CD8-positive, alpha-beta T cell (primary cell): ENCODE measurements at regions of chrX and their contacts with region 1.

Region 1: GRCh38 chrX:43557792-43558191 is 98.3 kb upstream of the MAOA start:
- DNase-seq: peak; percentile 29 to 78 (median 59)
- ATAC-seq: peak; percentile 44
- H3K4me3 ChIP-seq: no peak overlapping the region
- H3K4me3 Mint-ChIP-seq: no peak overlapping the region
- H3K27ac ChIP-seq: no peak overlapping the region
- H3K27ac Mint-ChIP-seq: no peak overlapping the region
- H3K4me1 ChIP-seq: peaks cover 4% of the 10 kb centered on the region
- H3K4me1 Mint-ChIP-seq: peaks cover 4% of the 10 kb centered on the region
- H3K27me3 ChIP-seq: no peaks in the 10 kb centered on the region
- H3K27me3 Mint-ChIP-seq: no peaks in the 10 kb centered on the region
- CTCF ChIP-seq: peak; percentile 56

Region 2: DNA sequence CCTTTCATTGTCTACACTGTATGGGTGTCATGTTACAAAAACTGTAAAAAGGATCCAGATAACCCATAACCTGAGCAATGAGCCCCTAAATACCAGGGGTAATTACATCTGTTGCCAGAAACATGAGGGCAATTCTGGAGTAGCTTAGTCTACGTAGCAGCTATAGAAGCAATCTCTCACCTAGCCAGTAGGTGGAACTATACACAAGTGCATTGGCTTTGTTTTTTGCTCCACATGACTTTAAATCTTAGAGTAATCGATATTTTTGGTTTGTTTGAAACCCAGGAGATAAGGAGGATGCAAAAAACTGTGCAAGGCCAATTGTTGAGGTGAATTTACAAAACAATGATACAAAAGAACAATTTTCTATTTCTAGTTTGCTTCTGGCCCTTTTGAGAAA is 1776.3 kb before region 1 on chrX:
- CTCF ChIA-PET with region 1: interaction called, 6 read pairs
- POLR2A ChIA-PET with region 1: no interaction called
- intact Hi-C with region 1: loop called (anchors 1 to 2 kb)
- DNase-seq: peak in 3 of 9 experiments; percentile 6 to 63 (median 51)
- ATAC-seq: peak; percentile 54
- H3K4me3 ChIP-seq: no peak overlapping the region
- H3K4me3 Mint-ChIP-seq: no peak overlapping the region
- H3K27ac ChIP-seq: no peak overlapping the region
- H3K27ac Mint-ChIP-seq: no peak overlapping the region
- H3K4me1 ChIP-seq: no peaks in the 10 kb centered on the region
- H3K4me1 Mint-ChIP-seq: peaks cover 15% of the 10 kb centered on the region
- H3K27me3 ChIP-seq: no peaks in the 10 kb centered on the region
- H3K27me3 Mint-ChIP-seq: no peaks in the 10 kb centered on the region
- CTCF ChIP-seq: peak; percentile 68

Region 3: DNA sequence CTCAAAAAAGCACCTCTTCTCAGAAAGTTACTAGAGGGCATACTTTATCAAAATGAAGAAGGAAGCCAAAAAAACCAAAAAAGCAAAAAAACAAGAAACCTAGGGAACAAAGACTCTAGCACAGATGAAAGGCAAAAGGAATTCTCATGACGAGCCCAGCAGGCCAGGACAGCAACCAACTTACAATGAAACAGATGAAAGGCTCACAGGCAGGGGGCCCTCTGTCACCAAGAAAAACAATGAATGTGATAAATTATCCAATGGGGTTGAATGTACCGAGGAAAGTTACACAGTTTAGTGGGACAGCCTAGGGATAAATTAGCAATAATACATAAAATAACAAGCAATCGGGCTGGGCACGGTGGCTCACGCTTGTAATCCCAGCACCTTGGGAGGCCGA is 1754.8 kb before region 1 on chrX:
- CTCF ChIA-PET with region 1: interaction called, 4 read pairs
- POLR2A ChIA-PET with region 1: no interaction called
- intact Hi-C with region 1: loop called (anchors 1 to 5 kb)
- DNase-seq: no peak
- ATAC-seq: no peak
- H3K4me3 ChIP-seq: no peak overlapping the region
- H3K4me3 Mint-ChIP-seq: no peak overlapping the region
- H3K27ac ChIP-seq: no peak overlapping the region
- H3K27ac Mint-ChIP-seq: no peak overlapping the region
- H3K4me1 ChIP-seq: peaks cover 7% of the 10 kb centered on the region
- H3K4me1 Mint-ChIP-seq: peaks cover 46% of the 10 kb centered on the region
- H3K27me3 ChIP-seq: no peaks in the 10 kb centered on the region
- H3K27me3 Mint-ChIP-seq: no peaks in the 10 kb centered on the region
- CTCF ChIP-seq: no peak

Region 4: DNA sequence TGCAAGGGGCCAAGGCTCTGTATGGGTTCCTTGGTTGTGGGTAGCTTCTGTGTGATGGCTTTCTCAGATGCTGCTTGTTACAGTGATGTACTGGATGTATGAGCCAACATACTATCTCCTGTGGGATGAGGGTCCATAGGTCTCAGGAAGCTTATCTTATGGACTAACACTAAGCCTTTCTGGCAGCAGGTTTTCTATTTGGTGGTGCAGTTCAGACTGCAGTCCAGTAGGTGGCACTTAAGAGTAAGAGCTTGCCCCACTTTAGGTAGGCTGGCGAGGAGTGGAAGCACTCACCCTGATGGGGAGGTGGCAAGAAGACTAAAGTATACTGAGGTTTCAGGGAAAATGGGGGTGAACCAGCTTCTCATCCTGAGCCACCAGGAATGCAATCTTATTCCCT is 208.4 kb before region 1 on chrX:
- CTCF ChIA-PET with region 1: interaction called, 3 read pairs
- POLR2A ChIA-PET with region 1: no interaction called
- intact Hi-C with region 1: loop called in 1 of 2 experiments (anchors 5 kb)
- DNase-seq: peak in 6 of 9 experiments; percentile 1 to 59 (median 30)
- ATAC-seq: peak; percentile 44
- H3K4me3 ChIP-seq: no peak overlapping the region
- H3K4me3 Mint-ChIP-seq: no peak overlapping the region
- H3K27ac ChIP-seq: no peak overlapping the region
- H3K27ac Mint-ChIP-seq: no peak overlapping the region
- H3K4me1 ChIP-seq: no peaks in the 10 kb centered on the region
- H3K4me1 Mint-ChIP-seq: peaks cover 8% of the 10 kb centered on the region
- H3K27me3 ChIP-seq: no peaks in the 10 kb centered on the region
- H3K27me3 Mint-ChIP-seq: no peaks in the 10 kb centered on the region
- CTCF ChIP-seq: peak; percentile 21

Region 5: GRCh38 chrX:43474305-43474704 is 83.5 kb before region 1 on chrX:
- CTCF ChIA-PET with region 1: no interaction called
- POLR2A ChIA-PET with region 1: no interaction called
- intact Hi-C with region 1: no loop called
- DNase-seq: no peak
- ATAC-seq: no peak
- H3K4me3 ChIP-seq: no peak overlapping the region
- H3K4me3 Mint-ChIP-seq: no peak overlapping the region
- H3K27ac ChIP-seq: no peak overlapping the region
- H3K27ac Mint-ChIP-seq: no peak overlapping the region
- H3K4me1 ChIP-seq: no peaks in the 10 kb centered on the region
- H3K4me1 Mint-ChIP-seq: no peaks in the 10 kb centered on the region
- H3K27me3 ChIP-seq: no peaks in the 10 kb centered on the region
- H3K27me3 Mint-ChIP-seq: no peaks in the 10 kb centered on the region
- CTCF ChIP-seq: no peak